Mucosa of descending colon (tissue), 3 donors: ENCODE measurements at regions of chr1 and their contacts with region 1.

Region 1: GRCh38 chr1:117674521-117675397 is 68.9 kb downstream of the TENT5C start:
- DNase-seq: peak in 2 of 3 donors; percentile 55 to 65
- ATAC-seq: peak; percentile 62
- H3K4me3 ChIP-seq: no peak overlapping the region
- H3K4me1 ChIP-seq: peaks cover 32% of the 10 kb centered on the region
- CTCF ChIP-seq: no peak

Region 2: DNA sequence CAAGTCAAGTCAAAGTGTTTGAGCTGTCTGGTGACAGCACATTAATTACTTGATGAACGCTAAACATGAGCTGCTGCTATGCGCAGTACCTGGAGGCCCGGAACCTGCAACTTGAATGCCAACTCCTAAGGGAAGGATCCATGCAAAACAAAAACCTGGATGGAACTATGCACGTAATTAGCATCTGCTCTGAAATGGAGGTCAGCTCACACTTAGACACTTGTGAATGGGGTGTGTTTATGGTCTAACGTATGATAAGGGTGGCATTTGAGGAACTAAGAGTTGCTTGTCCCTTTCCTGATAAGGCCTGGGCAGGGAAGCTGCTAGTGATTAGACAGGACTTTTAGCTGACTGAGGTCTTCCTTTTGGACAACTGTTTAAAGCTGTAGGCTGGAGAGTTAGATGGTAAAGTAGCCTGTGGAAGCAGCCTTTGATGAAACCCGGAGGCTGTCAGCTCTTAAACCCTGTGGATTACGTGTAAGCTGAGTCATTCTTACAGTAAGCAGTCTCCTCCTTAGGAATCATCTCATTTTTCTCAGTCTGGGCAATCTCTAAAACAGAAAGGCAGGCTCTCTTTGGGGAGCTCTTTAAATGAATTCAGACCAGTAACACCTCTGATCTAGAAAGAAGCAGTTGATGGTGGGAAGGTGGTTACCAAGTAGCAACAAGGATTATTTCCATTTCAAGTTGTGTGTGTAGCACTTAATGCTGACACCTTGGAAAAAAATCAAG is 62.1 kb before region 1 on chr1:
- intact Hi-C with region 1: loop called in 1 of 2 experiments (anchors 10 kb)
- DNase-seq: peak in 2 of 3 donors; percentile 48 to 64
- ATAC-seq: peak; percentile 85
- H3K4me3 ChIP-seq: no peak overlapping the region
- H3K4me1 ChIP-seq: peaks cover 67% of the 10 kb centered on the region
- CTCF ChIP-seq: no peak